Natural killer cell (primary cell): ENCODE measurements at regions of chr16 and their contacts with region 1.

Region 1: DNA sequence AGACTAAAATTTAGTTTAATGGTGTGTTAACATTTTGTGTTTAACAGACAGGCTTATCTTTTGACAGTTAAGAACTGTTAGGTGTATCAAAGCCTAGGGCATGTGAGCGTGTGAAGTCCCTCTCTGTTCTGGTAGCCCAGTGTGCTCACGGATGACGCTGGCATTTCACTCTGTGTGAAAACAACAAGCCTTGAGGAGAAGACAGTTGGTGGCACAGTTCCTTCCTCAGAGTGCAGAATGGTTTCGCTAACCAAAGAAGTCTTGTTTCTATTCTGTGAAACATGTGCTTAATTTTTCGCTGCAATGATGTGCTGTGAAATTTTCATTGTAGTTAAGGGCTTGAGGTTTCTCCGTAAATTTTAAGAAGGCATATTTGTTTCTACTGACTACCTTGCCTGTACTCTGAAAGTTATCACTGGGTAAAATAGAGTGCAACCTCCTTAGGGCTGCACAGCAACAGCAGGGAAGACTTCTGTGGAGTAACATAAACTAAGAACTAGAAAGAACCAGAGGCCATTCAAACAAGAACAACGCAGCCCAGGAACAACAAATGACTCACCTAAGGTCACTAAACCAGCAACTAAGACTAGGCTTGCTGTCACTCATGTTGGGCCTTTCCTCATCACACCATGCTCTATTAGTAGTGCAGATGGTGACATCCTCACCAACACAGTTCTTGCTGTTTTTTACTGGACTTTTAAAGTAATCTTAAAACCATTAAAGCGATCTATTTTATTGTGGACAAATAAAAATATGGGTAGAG is 33.4 kb downstream of the BRD7 start:
- DNase-seq: peak; percentile 58 to 64
- ATAC-seq: peak; percentile 80 to 94 (median 92)
- H3K4me3 ChIP-seq: no peak overlapping the region
- H3K4me3 Mint-ChIP-seq: peak overlapping the region; percentile 74
- H3K27ac ChIP-seq: peak overlapping the region; percentile 99
- H3K27ac Mint-ChIP-seq: peak overlapping the region; percentile 90 to 98
- H3K4me1 ChIP-seq: peaks cover 10% of the 10 kb centered on the region
- H3K4me1 Mint-ChIP-seq: peaks cover 42 to 45% of the 10 kb centered on the region in 2 donors
- H3K27me3 ChIP-seq: no peaks in the 10 kb centered on the region
- H3K27me3 Mint-ChIP-seq: no peaks in the 10 kb centered on the region
- CTCF ChIP-seq: no peak

Region 2: DNA sequence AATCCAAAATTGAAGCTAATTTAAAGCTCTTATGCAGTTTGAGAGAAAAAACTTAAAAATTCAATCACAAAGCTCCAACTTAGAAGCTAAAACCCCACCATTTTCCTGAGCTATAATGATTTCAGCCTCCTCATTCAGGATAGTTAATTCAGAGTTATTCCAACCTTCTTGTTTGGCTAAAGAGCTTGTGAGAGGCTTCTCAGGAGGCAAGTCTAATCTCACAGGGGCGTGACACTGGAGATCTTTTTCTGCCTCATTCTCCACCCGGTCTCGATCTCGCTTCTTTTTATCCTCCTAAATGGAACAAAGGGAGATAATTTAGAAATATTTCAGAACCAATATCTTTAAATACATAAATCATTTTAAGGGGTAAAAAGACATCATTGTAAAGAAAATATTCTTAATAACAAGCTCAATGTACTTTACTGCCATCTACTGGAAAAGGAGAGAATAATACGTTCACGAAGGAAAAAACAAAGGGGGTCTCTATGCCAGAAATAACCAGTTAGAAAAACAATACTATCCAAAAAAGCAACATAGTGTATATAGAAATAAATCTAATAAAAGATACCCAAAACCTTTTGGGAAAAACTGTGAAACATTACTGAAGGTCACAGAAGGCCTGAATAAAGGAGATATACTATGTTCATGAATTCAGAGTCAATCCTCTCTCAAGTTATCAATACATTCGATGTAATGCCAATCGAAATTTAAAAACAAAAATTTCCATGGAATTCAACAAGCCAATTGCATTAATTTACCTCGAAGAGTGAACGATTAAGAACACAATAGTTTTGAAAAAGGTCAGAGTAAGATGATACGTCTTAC is 19.5 kb after region 1 on chr16:
- intact Hi-C with region 1: loop called (anchors 2 kb)
- DNase-seq: peak in 1 of 2 donors; percentile 56
- ATAC-seq: peak in 2 of 3 donors; percentile 51 to 59
- H3K4me3 ChIP-seq: no peak overlapping the region
- H3K4me3 Mint-ChIP-seq: no peak overlapping the region
- H3K27ac ChIP-seq: peak overlapping the region; percentile 37
- H3K27ac Mint-ChIP-seq: peak overlapping the region; percentile 68 to 86
- H3K4me1 ChIP-seq: no peaks in the 10 kb centered on the region
- H3K4me1 Mint-ChIP-seq: peaks cover 16 to 17% of the 10 kb centered on the region in 2 donors
- H3K27me3 ChIP-seq: no peaks in the 10 kb centered on the region
- H3K27me3 Mint-ChIP-seq: no peaks in the 10 kb centered on the region
- CTCF ChIP-seq: peak; percentile 88